ENCODE measurements at regions of chr1 and their contacts with region 1.

Region 1: GRCh38 chr1:182781841-182782586 is 7.6 kb upstream of the NPL start:
- DNase-seq: peak; percentile 85
- H3K4me3 Mint-ChIP-seq: no peak overlapping the region
- H3K27ac Mint-ChIP-seq: no peak overlapping the region
- H3K4me1 Mint-ChIP-seq: peaks cover 8% of the 10 kb centered on the region
- H3K27me3 Mint-ChIP-seq: no peaks in the 10 kb centered on the region

Region 2: GRCh38 chr1:182446033-182446669 is 335.9 kb before region 1 on chr1:
- CTCF ChIA-PET with region 1: interaction called, 9 read pairs
- POLR2A ChIA-PET with region 1: no interaction called
- intact Hi-C with region 1: loop called (anchors 1 kb)
- DNase-seq: peak; percentile 17
- H3K4me3 Mint-ChIP-seq: peak overlapping the region; percentile 30
- H3K27ac Mint-ChIP-seq: no peak overlapping the region
- H3K4me1 Mint-ChIP-seq: peaks cover 3% of the 10 kb centered on the region
- H3K27me3 Mint-ChIP-seq: peaks cover 4% of the 10 kb centered on the region

Region 3: DNA sequence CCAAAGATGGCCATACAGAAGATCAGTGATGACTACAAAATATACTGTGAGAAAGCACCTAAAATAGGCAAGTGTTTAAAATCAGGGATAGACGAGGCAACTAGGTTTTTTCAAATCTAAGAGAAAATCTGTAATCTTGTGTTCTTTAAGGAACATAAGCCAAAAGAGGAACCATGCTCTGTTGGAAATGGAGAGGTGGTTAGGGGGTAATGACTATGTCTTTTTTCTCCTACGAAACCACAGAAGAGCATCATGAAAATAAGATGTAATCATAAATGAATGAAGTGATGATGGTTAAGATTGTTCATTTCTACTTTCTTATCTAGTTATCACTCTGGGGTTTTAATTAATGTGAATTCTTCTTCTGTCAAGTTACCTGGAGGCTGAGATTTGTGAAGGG is 289.0 kb before region 1 on chr1:
- CTCF ChIA-PET with region 1: no interaction called
- POLR2A ChIA-PET with region 1: no interaction called
- intact Hi-C with region 1: no loop called
- DNase-seq: no peak
- H3K4me3 Mint-ChIP-seq: no peak overlapping the region
- H3K27ac Mint-ChIP-seq: no peak overlapping the region
- H3K4me1 Mint-ChIP-seq: no peaks in the 10 kb centered on the region
- H3K27me3 Mint-ChIP-seq: peaks cover 1% of the 10 kb centered on the region

Region 4: GRCh38 chr1:182614796-182615454 is 167.1 kb before region 1 on chr1:
- CTCF ChIA-PET with region 1: interaction called, 45 read pairs
- POLR2A ChIA-PET with region 1: no interaction called
- intact Hi-C with region 1: no loop called
- DNase-seq: peak; percentile 76
- H3K4me3 Mint-ChIP-seq: peak overlapping the region; percentile 77
- H3K27ac Mint-ChIP-seq: peak overlapping the region; percentile 89
- H3K4me1 Mint-ChIP-seq: peaks cover 55% of the 10 kb centered on the region
- H3K27me3 Mint-ChIP-seq: peaks cover 12% of the 10 kb centered on the region

Region 5: GRCh38 chr1:182771187-182771984 is 10.6 kb before region 1 on chr1:
- CTCF ChIA-PET with region 1: interaction called, 16 read pairs
- POLR2A ChIA-PET with region 1: no interaction called
- intact Hi-C with region 1: no loop called
- DNase-seq: no peak
- H3K4me3 Mint-ChIP-seq: no peak overlapping the region
- H3K27ac Mint-ChIP-seq: no peak overlapping the region
- H3K4me1 Mint-ChIP-seq: no peaks in the 10 kb centered on the region
- H3K27me3 Mint-ChIP-seq: peaks cover 9% of the 10 kb centered on the region

Region 6: DNA sequence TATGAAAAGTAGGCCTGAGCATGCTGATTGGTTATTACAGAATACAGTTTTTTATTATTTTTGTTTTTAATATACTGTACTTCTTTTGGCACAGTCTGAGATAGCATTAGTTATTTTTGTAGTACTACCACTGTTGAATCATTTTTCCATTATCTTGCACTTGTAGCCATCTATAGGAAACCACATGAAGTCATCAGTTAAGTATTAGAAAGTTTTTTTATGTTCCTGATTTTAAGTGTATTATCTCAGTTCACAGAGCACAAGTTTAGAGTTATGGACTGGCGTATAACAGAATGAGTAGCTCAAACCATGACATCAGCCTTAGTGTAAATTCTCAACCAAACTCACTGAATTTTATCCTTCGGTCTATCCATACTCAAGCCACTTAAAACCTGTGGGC is 80.0 kb after region 1 on chr1:
- CTCF ChIA-PET with region 1: no interaction called
- POLR2A ChIA-PET with region 1: no interaction called
- intact Hi-C with region 1: no loop called
- DNase-seq: no peak
- H3K4me3 Mint-ChIP-seq: no peak overlapping the region
- H3K27ac Mint-ChIP-seq: peak overlapping the region; percentile 65
- H3K4me1 Mint-ChIP-seq: peaks cover 49% of the 10 kb centered on the region
- H3K27me3 Mint-ChIP-seq: no peaks in the 10 kb centered on the region

Region 7: GRCh38 chr1:183180634-183181056 is 398.6 kb after region 1 on chr1:
- CTCF ChIA-PET with region 1: no interaction called
- POLR2A ChIA-PET with region 1: no interaction called
- intact Hi-C with region 1: no loop called
- DNase-seq: peak; percentile 43
- H3K4me3 Mint-ChIP-seq: no peak overlapping the region
- H3K27ac Mint-ChIP-seq: no peak overlapping the region
- H3K4me1 Mint-ChIP-seq: peaks cover 9% of the 10 kb centered on the region
- H3K27me3 Mint-ChIP-seq: peaks cover 4% of the 10 kb centered on the region

Region 8: GRCh38 chr1:183195142-183195574 is 413.1 kb after region 1 on chr1:
- CTCF ChIA-PET with region 1: no interaction called
- POLR2A ChIA-PET with region 1: no interaction called
- intact Hi-C with region 1: no loop called
- DNase-seq: no peak
- H3K4me3 Mint-ChIP-seq: no peak overlapping the region
- H3K27ac Mint-ChIP-seq: no peak overlapping the region
- H3K4me1 Mint-ChIP-seq: peaks cover 11% of the 10 kb centered on the region
- H3K27me3 Mint-ChIP-seq: peaks cover 14% of the 10 kb centered on the region